Common myeloid progenitor, CD34-positive (primary cell): ENCODE measurements at regions of chr15 and their contacts with region 1.

Region 1: DNA sequence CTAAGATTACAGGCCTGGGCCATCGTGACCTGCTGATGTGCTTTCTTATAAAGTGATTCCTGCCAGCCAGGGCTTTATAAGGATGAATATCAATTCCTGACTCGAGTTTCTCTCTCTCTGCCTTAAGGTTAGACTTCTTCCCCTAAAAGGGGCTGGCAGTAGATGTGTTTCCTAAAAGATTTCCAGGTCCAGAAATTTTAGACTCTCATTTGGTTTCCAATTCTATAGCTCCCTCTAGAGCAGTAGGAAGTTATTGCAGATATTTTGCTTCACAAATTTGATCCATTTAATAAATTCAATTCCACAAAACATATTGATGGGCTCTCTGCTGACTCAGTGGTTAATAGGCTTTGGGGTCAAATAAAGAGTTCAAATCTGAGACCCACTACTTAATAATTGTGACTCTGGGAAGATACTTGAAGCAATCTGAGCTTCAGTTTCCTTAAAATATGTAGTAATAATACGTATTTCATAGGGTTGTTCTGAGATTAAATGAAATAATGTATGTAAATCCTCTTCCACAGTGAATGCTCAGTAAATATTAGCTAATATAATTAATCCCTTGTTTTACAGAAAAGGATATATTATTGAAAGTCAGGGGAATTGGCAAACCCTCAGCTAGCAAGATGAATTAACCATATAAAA is 2.1 kb downstream of the TRIM69 start:
- DNase-seq: peak; percentile 60 to 78 (median 65)
- H3K4me3 ChIP-seq: no peak overlapping the region
- H3K27ac ChIP-seq: no peak overlapping the region
- H3K4me1 ChIP-seq: peaks cover 0 to 23% (median 9%) of the 10 kb centered on the region in 4 experiments
- H3K27me3 ChIP-seq: no peaks in the 10 kb centered on the region

Region 2: GRCh38 chr15:44584162-44584749 is 154.2 kb before region 1 on chr15:
- CTCF ChIA-PET with region 1: interaction called, 25 read pairs
- POLR2A ChIA-PET with region 1: no interaction called
- DNase-seq: peak; percentile 56 to 76 (median 72)
- H3K4me3 ChIP-seq: no peak overlapping the region
- H3K27ac ChIP-seq: no peak overlapping the region
- H3K4me1 ChIP-seq: no peaks in the 10 kb centered on the region
- H3K27me3 ChIP-seq: no peaks in the 10 kb centered on the region

Region 3: DNA sequence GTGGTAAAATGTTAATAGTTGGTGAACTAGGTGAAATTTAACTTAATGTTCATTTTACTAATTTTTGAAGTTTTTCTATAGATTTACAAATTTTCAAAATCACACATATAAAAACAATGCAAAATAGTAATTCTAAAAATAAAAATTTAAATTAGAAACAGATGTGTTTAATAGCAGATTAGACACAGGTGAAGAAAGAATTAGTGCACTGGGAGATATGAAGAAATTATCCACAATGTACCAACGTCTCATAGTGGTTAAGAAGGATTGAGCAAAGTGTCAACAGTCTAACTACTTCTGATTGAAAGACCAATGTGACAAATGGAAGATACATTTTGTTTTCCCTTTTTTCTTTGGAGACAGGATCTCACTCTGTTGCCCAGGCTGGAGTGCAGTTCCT is 101.5 kb before region 1 on chr15:
- CTCF ChIA-PET with region 1: interaction called, 11 read pairs
- POLR2A ChIA-PET with region 1: no interaction called
- DNase-seq: peak in 2 of 3 donors; percentile 5 to 15
- H3K4me3 ChIP-seq: no peak overlapping the region
- H3K27ac ChIP-seq: no peak overlapping the region
- H3K4me1 ChIP-seq: no peaks in the 10 kb centered on the region
- H3K27me3 ChIP-seq: no peaks in the 10 kb centered on the region

Region 4: DNA sequence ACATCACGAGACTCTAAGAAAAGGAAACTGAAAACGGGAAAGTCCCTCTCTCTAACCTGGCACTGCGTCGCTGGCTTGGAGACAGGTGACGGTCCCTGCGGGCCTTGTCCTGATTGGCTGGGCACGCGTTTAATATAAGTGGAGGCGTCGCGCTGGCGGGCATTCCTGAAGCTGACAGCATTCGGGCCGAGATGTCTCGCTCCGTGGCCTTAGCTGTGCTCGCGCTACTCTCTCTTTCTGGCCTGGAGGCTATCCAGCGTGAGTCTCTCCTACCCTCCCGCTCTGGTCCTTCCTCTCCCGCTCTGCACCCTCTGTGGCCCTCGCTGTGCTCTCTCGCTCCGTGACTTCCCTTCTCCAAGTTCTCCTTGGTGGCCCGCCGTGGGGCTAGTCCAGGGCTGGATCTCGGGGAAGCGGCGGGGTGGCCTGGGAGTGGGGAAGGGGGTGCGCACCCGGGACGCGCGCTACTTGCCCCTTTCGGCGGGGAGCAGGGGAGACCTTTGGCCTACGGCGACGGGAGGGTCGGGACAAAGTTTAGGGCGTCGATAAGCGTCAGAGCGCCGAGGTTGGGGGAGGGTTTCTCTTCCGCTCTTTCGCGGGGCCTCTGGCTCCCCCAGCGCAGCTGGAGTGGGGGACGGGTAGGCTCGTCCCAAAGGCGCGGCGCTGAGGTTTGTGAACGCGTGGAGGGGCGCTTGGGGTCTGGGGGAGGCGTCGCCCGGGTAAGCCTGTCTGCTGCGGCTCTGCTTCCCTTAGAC is 26.9 kb before region 1 on chr15 and contains the start of gene B2M:
- CTCF ChIA-PET with region 1: interaction called, 105 read pairs
- POLR2A ChIA-PET with region 1: interaction called, 59 read pairs
- DNase-seq: peak; percentile 97 to 99 (median 99)
- H3K4me3 ChIP-seq: peak within 1 kb of the TSS; percentile 83 to 100 (median 94)
- H3K27ac ChIP-seq: peak within 1 kb of the TSS; percentile 97 to 99
- H3K4me1 ChIP-seq: peaks cover 18 to 49% (median 29%) of the 10 kb centered on the region in 4 experiments
- H3K27me3 ChIP-seq: no peaks in the 10 kb centered on the region

Region 5: GRCh38 chr15:44719293-44719999 is 19.0 kb before region 1 on chr15:
- CTCF ChIA-PET with region 1: interaction called, 105 read pairs
- POLR2A ChIA-PET with region 1: interaction called, 59 read pairs
- DNase-seq: peak in 2 of 3 donors; percentile 69 to 70
- H3K4me3 ChIP-seq: no peak overlapping the region
- H3K27ac ChIP-seq: peak overlapping the region in 1 of 2 experiments; percentile 45
- H3K4me1 ChIP-seq: peaks cover 6 to 32% (median 20%) of the 10 kb centered on the region in 4 experiments
- H3K27me3 ChIP-seq: no peaks in the 10 kb centered on the region

Region 6: GRCh38 chr15:44769521-44769920 is 31.1 kb after region 1 on chr15:
- CTCF ChIA-PET with region 1: no interaction called
- POLR2A ChIA-PET with region 1: no interaction called
- DNase-seq: no peak
- H3K4me3 ChIP-seq: no peak overlapping the region
- H3K27ac ChIP-seq: no peak overlapping the region
- H3K4me1 ChIP-seq: no peaks in the 10 kb centered on the region
- H3K27me3 ChIP-seq: no peaks in the 10 kb centered on the region

Region 7: GRCh38 chr15:44812029-44812517 is 73.6 kb after region 1 on chr15:
- CTCF ChIA-PET with region 1: no interaction called
- POLR2A ChIA-PET with region 1: no interaction called
- DNase-seq: no peak
- H3K4me3 ChIP-seq: no peak overlapping the region
- H3K27ac ChIP-seq: no peak overlapping the region
- H3K4me1 ChIP-seq: no peaks in the 10 kb centered on the region
- H3K27me3 ChIP-seq: no peaks in the 10 kb centered on the region